OCI-LY7 (cell line): ENCODE measurements at regions of chr2 and their contacts with region 1.

Region 1: DNA sequence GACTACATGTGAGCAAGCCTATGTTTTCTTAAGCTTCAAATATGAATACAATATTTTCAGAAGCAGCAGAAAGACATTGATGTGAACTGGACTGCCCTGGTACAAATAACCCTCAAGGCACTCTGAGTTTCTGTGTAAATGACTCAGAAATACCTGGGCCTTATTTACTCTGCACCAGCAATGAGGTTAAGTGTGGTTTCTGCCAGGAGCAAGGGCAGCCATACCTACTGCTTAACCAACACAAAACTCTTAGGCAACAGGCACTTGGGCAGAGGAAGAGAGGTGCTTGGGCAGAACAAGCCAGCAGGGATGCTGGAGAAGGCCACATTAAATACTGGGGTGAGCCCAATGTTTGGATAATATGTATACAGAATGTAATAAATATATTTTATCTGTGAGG is 29.4 kb upstream of the ARL5A start:
- DNase-seq: no peak
- H3K4me3 ChIP-seq: no peak overlapping the region
- H3K27ac ChIP-seq: no peak overlapping the region
- H3K4me1 ChIP-seq: peaks cover 16% of the 10 kb centered on the region
- CTCF ChIP-seq: no peak

Region 2: GRCh38 chr2:151258121-151258520 is 599.5 kb before region 1 on chr2:
- CTCF ChIA-PET with region 1: no interaction called
- POLR2A ChIA-PET with region 1: no interaction called
- intact Hi-C with region 1: no loop called
- DNase-seq: no peak
- H3K4me3 ChIP-seq: no peak overlapping the region
- H3K27ac ChIP-seq: no peak overlapping the region
- H3K4me1 ChIP-seq: peaks cover 15% of the 10 kb centered on the region
- CTCF ChIP-seq: no peak

Region 3: GRCh38 chr2:151840216-151841046 is 17.2 kb before region 1 on chr2:
- CTCF ChIA-PET with region 1: no interaction called
- POLR2A ChIA-PET with region 1: interaction called, 23 read pairs
- intact Hi-C with region 1: no loop called
- DNase-seq: peak; percentile 37
- H3K4me3 ChIP-seq: no peak overlapping the region
- H3K27ac ChIP-seq: peak overlapping the region; percentile 33
- H3K4me1 ChIP-seq: peaks cover 61% of the 10 kb centered on the region
- CTCF ChIP-seq: no peak

Region 4: DNA sequence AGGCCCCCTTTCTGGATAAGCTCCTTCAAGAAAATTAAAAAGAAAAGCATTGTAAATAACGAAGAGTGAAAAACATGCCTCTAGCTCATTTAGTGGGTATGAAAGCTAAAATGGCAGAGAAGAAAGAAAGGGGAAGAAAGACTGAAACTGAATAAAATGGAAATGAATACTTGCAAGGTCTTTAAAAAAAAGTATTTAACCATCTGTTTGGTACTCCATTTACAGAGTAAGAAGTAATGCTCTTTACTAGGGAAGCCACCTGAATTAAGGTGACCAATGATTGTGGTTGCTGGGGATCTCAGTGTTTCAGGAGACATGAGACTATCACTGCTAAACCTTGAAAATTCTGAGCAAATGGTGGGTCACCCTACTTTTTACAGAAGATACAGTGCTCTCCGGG is 11.8 kb before region 1 on chr2:
- CTCF ChIA-PET with region 1: no interaction called
- POLR2A ChIA-PET with region 1: interaction called, 23 read pairs
- intact Hi-C with region 1: no loop called
- DNase-seq: no peak
- H3K4me3 ChIP-seq: no peak overlapping the region
- H3K27ac ChIP-seq: no peak overlapping the region
- H3K4me1 ChIP-seq: peaks cover 40% of the 10 kb centered on the region
- CTCF ChIP-seq: no peak